B cell (primary cell): ENCODE measurements at regions of chr6 and their contacts with region 1.

Region 1: GRCh38 chr6:164927288-164928056 is 381.9 kb downstream of the C6orf118 start:
- DNase-seq: peak; percentile 53
- ATAC-seq: peak; percentile 58
- H3K4me3 ChIP-seq: no peak overlapping the region
- H3K4me3 Mint-ChIP-seq: no peak overlapping the region
- H3K27ac ChIP-seq: no peak overlapping the region
- H3K27ac Mint-ChIP-seq: no peak overlapping the region
- H3K4me1 ChIP-seq: no peaks in the 10 kb centered on the region
- H3K4me1 Mint-ChIP-seq: no peaks in the 10 kb centered on the region
- H3K27me3 ChIP-seq: no peaks in the 10 kb centered on the region
- H3K27me3 Mint-ChIP-seq: no peaks in the 10 kb centered on the region
- CTCF ChIP-seq: peak; percentile 98

Region 2: GRCh38 chr6:163180874-163181541 is 1746.5 kb before region 1 on chr6:
- CTCF ChIA-PET with region 1: no interaction called
- POLR2A ChIA-PET with region 1: no interaction called
- intact Hi-C with region 1: loop called (anchors 5 kb)
- DNase-seq: peak; percentile 19
- ATAC-seq: no peak
- H3K4me3 ChIP-seq: no peak overlapping the region
- H3K4me3 Mint-ChIP-seq: no peak overlapping the region
- H3K27ac ChIP-seq: no peak overlapping the region
- H3K27ac Mint-ChIP-seq: no peak overlapping the region
- H3K4me1 ChIP-seq: no peaks in the 10 kb centered on the region
- H3K4me1 Mint-ChIP-seq: no peaks in the 10 kb centered on the region
- H3K27me3 ChIP-seq: peaks cover 0 to 4% (median 0%) of the 10 kb centered on the region in 4 experiments
- H3K27me3 Mint-ChIP-seq: no peaks in the 10 kb centered on the region
- CTCF ChIP-seq: no peak